A673 (cell line): ENCODE measurements at regions of chr5 and their contacts with region 1.

Region 1: GRCh38 chr5:177113566-177114424 is 19.8 kb upstream of the NSD1 start:
- DNase-seq: peak; percentile 71
- H3K4me3 ChIP-seq: no peak overlapping the region
- H3K27ac ChIP-seq: no peak overlapping the region
- H3K4me1 ChIP-seq: no peaks in the 10 kb centered on the region
- H3K27me3 ChIP-seq: no peaks in the 10 kb centered on the region
- CTCF ChIP-seq: peak; percentile 91

Region 2: DNA sequence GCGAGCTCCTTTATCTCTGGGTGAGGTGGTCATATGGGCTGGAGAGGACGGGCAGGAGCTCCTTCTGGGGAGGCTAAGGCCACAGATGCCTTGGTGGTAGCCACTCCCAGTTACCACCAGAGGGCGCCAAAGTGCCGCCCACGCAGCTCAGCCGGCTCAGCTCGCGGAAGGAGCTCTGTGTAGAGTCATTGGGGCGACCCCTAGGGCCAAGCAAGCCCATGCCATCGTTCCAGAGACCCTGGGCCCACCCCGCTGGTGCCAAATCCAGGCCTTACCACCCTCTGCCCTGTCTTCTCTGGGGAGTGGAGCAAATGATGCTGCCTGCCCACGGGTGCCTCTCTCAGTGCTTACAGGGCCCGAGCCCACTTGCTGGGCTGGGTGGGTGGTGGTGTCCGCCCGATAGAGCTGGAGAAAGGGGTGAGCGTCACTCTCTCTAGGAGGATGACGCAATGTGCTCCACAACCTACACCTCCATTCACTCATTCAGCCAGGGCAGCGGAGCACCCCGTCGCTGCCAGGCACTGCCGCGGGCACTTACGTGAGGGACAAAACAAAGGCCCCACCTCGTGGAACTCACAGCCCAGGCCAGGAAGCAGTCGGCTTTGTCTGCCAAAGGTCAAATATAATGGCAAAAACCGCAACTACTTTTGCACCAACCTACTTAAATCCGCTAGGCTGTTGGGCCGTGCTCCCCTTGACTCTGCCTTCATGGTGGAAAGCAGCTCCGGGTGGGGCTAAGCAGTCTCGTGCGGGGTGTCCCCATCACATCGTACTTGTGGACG is 452.7 kb before region 1 on chr5:
- CTCF ChIA-PET with region 1: interaction called, 23 read pairs
- POLR2A ChIA-PET with region 1: no interaction called
- intact Hi-C with region 1: loop called (anchors 1 kb)
- DNase-seq: peak; percentile 79
- H3K4me3 ChIP-seq: no peak overlapping the region
- H3K27ac ChIP-seq: no peak overlapping the region
- H3K4me1 ChIP-seq: no peaks in the 10 kb centered on the region
- H3K27me3 ChIP-seq: no peaks in the 10 kb centered on the region
- CTCF ChIP-seq: peak; percentile 91

Region 3: GRCh38 chr5:176870110-176870593 is 243.6 kb before region 1 on chr5:
- CTCF ChIA-PET with region 1: no interaction called
- POLR2A ChIA-PET with region 1: no interaction called
- intact Hi-C with region 1: no loop called
- DNase-seq: peak; percentile 19
- H3K4me3 ChIP-seq: no peak overlapping the region
- H3K27ac ChIP-seq: no peak overlapping the region
- H3K4me1 ChIP-seq: no peaks in the 10 kb centered on the region
- H3K27me3 ChIP-seq: no peaks in the 10 kb centered on the region
- CTCF ChIP-seq: peak; percentile 38

Region 4: GRCh38 chr5:177071666-177072385 is 42.0 kb before region 1 on chr5:
- CTCF ChIA-PET with region 1: interaction called, 15 read pairs
- POLR2A ChIA-PET with region 1: no interaction called
- intact Hi-C with region 1: no loop called
- DNase-seq: peak; percentile 86
- H3K4me3 ChIP-seq: no peak overlapping the region
- H3K27ac ChIP-seq: no peak overlapping the region
- H3K4me1 ChIP-seq: no peaks in the 10 kb centered on the region
- H3K27me3 ChIP-seq: no peaks in the 10 kb centered on the region
- CTCF ChIP-seq: peak; percentile 86

Region 5: DNA sequence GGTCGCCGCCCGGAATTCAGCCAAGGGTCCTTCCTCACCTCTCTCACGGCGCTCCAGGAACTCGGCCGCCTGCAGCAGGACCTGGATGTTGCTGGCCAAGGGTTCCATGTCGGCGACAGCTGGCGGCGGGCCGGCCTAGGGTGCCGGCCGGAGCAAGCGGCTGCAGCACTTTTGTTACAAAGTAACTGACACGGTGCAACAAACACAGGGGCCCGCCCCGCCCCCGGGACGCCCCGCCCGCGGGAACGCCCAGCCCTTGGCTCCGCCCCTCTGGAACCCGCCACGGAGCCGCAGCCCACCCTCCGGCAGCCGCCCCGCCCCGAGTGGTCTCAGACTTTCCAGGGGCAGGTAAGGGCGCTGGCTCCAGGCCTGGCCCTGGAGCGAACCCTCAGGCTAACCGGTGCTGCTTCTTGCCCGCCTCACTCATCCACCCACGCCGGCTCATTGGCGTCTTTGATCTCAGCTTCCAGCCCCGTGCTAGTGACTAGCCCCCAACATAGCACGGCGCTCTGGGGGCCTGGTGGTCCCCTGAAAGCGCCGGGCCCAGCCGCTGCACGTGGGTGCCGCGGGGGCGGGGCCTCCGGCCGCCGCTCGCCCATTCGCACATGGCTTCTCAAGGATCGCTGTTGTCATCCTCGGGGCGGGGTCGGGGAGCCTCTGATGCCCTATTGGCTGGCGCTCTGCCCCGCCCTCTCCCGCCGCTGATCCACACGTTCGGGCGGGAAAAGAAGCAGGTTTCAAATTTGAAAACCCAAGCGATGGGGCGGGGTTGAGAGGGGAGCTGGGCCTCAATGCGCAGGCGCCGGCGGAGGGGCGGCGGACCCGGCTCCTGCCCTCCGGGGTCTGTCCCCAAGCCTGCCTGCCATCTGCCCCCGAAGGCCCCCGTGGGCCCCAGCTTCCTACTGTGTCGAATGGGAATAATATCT is 198.2 kb after region 1 on chr5 and contains the start of gene MXD3:
- CTCF ChIA-PET with region 1: interaction called, 6 read pairs
- POLR2A ChIA-PET with region 1: no interaction called
- intact Hi-C with region 1: loop called (anchors 2 kb)
- DNase-seq: peak; percentile 98
- H3K4me3 ChIP-seq: peak within 1 kb of the TSS; percentile 80
- H3K27ac ChIP-seq: peak within 1 kb of the TSS; percentile 97
- H3K4me1 ChIP-seq: peaks cover 20% of the 10 kb centered on the region
- H3K27me3 ChIP-seq: no peaks in the 10 kb centered on the region
- CTCF ChIP-seq: no peak
- total RNA-seq, gene MXD3: 15.1 and 19.4 TPM in 2 replicates

Region 6: DNA sequence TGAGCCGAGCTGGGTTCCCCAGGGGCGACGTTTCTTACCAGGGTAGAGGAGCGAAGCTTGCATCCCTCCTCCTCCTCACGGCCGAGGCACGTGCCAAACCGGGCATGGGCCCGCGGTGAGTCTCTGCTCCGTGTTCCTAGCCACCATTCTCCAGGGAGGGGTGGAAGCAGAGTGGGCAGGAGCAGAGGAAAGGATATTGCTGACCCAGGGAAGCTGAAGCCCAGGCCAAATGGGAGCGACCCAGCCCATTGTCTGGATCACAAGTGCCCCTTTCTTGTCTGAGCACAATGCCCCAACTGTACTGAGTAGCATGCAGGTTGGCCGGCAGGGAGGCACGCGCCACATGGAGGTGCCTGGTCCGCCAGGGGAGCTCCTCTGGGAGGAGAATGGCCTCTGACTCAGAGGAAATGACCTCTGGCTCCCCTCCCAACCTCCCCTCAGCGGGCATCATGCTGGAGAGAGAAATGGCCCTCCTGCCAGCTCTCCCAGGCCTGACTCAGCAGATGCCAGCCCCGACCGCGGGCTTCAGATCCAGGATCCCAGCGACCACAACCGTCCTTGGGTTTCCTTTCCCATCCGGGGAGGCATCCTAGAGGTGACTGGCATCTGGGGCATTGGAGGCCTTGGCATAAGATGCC is 333.9 kb after region 1 on chr5:
- CTCF ChIA-PET with region 1: no interaction called
- POLR2A ChIA-PET with region 1: no interaction called
- intact Hi-C with region 1: loop called (anchors 2 kb)
- DNase-seq: no peak
- H3K4me3 ChIP-seq: no peak overlapping the region
- H3K27ac ChIP-seq: no peak overlapping the region
- H3K4me1 ChIP-seq: peaks cover 4% of the 10 kb centered on the region
- H3K27me3 ChIP-seq: no peaks in the 10 kb centered on the region
- CTCF ChIP-seq: no peak

Region 7: DNA sequence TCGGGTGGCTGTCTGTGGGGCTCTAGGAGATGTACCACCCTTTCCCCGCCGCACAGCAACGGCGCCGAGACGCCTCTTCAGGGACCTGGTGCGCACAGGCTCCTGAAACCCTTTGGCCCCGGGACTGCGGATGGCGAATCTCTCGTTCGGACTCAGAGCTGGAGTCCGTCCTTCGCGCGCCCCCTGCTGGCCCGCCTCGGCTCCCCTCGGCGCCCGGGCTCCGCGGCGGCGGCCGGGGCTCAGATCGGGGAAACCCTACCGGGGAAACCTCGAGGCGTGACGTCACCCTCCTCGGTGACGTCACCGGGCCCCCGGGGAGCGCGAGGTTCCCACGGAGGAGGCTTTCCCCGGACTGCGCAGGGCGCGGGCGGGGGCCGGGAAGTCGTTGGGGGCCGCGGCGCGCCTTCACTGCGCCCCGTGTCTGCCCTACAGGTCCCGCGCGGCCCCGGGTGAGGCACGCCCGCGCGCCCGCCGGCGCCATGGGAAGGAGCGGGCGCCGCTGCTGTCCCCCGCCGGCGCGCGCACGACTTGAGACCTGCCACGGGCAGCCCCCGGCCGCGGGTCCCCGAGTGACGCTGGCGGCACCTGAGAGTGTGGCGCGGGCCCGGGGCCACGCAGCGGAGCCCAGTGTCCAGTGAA is 340.7 kb after region 1 on chr5:
- CTCF ChIA-PET with region 1: interaction called, 11 read pairs
- POLR2A ChIA-PET with region 1: interaction called, 3 read pairs
- intact Hi-C with region 1: loop called (anchors 2 kb)
- DNase-seq: peak; percentile 88
- H3K4me3 ChIP-seq: peak overlapping the region; percentile 62
- H3K27ac ChIP-seq: peak overlapping the region; percentile 81
- H3K4me1 ChIP-seq: peaks cover 13% of the 10 kb centered on the region
- H3K27me3 ChIP-seq: no peaks in the 10 kb centered on the region
- CTCF ChIP-seq: peak; percentile 60

Region 8: GRCh38 chr5:177483994-177484901 is 370.5 kb after region 1 on chr5:
- CTCF ChIA-PET with region 1: no interaction called
- POLR2A ChIA-PET with region 1: no interaction called
- intact Hi-C with region 1: no loop called
- DNase-seq: no peak
- H3K4me3 ChIP-seq: no peak overlapping the region
- H3K27ac ChIP-seq: no peak overlapping the region
- H3K4me1 ChIP-seq: no peaks in the 10 kb centered on the region
- H3K27me3 ChIP-seq: no peaks in the 10 kb centered on the region
- CTCF ChIP-seq: no peak

Region 9: GRCh38 chr5:177497292-177498033 is 383.7 kb after region 1 on chr5 and contains the start of gene PDLIM7:
- CTCF ChIA-PET with region 1: interaction called, 3 read pairs
- POLR2A ChIA-PET with region 1: no interaction called
- intact Hi-C with region 1: loop called (anchors 1 kb)
- DNase-seq: peak; percentile 94
- H3K4me3 ChIP-seq: peak within 1 kb of the TSS; percentile 81
- H3K27ac ChIP-seq: peak within 1 kb of the TSS; percentile 93
- H3K4me1 ChIP-seq: peaks cover 36% of the 10 kb centered on the region
- H3K27me3 ChIP-seq: no peaks in the 10 kb centered on the region
- CTCF ChIP-seq: no peak
- total RNA-seq, gene PDLIM7: 116 and 132 TPM in 2 replicates